A673 (cell line): ENCODE measurements at regions of chr2 and their contacts with region 1.

Region 1: DNA sequence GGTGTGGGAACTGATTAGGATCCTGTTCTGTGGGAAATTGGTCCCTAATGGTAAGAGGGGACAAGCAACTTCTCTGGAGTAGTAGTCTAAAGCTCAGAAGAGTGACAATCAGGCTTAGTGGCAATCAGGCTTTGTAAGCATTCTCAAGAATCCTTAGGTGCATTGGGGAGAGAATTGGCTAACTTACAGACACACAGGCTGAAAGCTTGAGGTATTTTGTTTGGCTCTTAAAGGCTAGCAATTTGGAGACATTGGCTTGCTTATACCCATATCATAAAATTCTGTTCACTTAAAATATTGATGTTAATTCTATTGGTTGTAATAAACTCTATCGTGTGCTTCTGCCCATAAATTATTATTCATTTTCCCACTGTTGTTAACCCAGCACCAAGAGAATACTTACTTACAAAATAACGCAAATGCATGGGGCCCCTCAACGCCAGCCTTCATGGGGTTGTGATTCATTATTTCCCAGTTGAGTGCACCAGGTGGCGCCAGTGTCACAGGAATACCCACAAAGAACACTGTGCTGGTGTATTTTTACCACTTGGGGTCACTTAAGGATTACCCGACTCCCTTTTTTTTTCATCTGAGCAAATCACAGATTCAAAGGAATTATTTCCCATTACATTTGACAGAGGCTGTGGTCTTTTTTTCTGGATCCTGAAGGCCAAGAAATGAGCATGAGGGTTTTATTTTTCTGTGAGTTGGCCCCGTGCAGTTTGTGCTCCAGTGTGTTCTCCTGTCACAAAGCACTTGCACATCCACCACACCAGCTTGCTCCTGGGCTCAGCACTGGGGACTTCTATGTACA is 45.5 kb downstream of the DDX1 start:
- DNase-seq: peak; percentile 79
- H3K4me3 ChIP-seq: no peak overlapping the region
- H3K27ac ChIP-seq: no peak overlapping the region
- H3K4me1 ChIP-seq: peaks cover 9% of the 10 kb centered on the region
- H3K27me3 ChIP-seq: no peaks in the 10 kb centered on the region
- CTCF ChIP-seq: peak; percentile 92

Region 2: DNA sequence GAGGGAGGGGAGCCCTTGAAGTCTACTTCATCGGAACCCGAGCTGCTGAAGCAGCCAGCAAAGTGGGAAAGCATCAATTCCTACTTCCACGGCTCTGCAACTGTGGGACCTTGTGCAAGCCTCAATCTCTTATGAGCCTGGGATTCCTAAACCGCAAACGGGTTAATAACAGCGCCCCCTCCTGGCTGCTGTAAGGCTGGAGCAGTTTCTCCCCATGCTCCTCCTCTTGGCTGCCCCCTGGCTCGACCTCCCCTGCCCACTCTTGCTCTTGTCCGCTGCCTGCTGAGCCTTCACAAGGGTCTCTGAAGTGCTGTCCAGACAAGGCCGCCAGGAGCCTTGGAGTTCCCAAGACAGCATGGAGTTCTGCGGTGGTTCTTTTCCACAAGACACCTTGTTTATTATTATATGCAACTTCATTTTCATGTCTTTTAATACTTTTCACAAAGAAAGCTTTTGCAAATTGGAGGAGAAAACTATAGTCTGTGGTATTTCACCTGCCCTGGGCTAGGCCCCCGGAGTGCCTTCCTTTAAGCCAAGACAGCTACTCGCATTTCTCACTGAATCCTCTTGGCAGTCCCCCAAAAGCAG is 111.7 kb after region 1 on chr2:
- CTCF ChIA-PET with region 1: no interaction called
- POLR2A ChIA-PET with region 1: no interaction called
- intact Hi-C with region 1: loop called (anchors 5 kb)
- DNase-seq: peak; percentile 41
- H3K4me3 ChIP-seq: no peak overlapping the region
- H3K27ac ChIP-seq: no peak overlapping the region
- H3K4me1 ChIP-seq: no peaks in the 10 kb centered on the region
- H3K27me3 ChIP-seq: no peaks in the 10 kb centered on the region
- CTCF ChIP-seq: peak; percentile 61

Region 3: DNA sequence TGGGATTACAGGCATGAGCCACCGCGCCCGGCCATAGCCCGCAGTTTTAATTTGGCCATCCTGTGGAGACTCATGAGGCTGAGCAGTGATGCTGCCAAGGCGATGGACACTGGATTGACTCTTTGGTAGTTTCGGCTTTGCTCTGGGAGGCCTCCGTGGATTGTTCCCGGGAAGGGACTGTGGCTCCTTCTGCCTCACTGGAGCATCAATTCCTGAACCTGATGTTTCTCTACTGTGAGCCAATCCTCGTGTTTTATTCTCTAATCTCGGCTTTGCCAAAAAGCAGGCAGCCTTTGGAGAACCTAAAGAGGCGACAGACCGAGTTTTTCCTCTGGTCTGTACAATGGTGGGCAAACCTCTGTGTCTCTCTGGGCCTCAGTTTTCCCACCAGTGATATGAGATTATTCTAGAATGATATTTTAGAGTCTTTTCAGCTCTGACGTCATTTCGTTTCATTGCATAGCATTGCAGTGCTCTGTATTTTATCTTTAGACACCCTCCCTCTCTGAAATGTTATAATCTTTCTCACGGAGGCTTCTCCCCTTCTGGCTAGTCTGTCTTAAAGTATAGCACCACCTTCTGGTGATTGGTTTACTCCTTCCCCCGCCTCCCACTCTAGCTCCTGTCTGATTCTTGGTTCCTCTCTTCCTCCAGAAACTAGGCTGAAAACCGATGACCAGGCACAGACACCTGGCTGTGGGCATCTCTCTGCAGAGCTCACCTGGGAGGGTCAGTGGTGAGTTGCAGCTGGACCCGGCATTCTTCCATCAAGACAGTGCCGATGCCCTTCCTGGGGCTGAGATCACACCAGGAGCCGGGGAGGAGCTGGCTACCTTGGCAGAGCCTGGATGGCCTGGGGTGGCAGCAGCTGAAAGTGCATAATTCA is 644.5 kb after region 1 on chr2:
- CTCF ChIA-PET with region 1: no interaction called
- POLR2A ChIA-PET with region 1: no interaction called
- intact Hi-C with region 1: loop called (anchors 5 kb)
- DNase-seq: peak; percentile 71
- H3K4me3 ChIP-seq: no peak overlapping the region
- H3K27ac ChIP-seq: no peak overlapping the region
- H3K4me1 ChIP-seq: no peaks in the 10 kb centered on the region
- H3K27me3 ChIP-seq: no peaks in the 10 kb centered on the region
- CTCF ChIP-seq: peak; percentile 73

Region 4: GRCh38 chr2:16507655-16508489 is 870.7 kb after region 1 on chr2:
- CTCF ChIA-PET with region 1: no interaction called
- POLR2A ChIA-PET with region 1: no interaction called
- intact Hi-C with region 1: loop called (anchors 1 kb)
- DNase-seq: peak; percentile 72
- H3K4me3 ChIP-seq: peak overlapping the region; percentile 47
- H3K27ac ChIP-seq: no peak overlapping the region
- H3K4me1 ChIP-seq: no peaks in the 10 kb centered on the region
- H3K27me3 ChIP-seq: no peaks in the 10 kb centered on the region
- CTCF ChIP-seq: peak; percentile 80